Naive thymus-derived CD4-positive, alpha-beta T cell (primary cell): ENCODE measurements at regions of chr11 and their contacts with region 1.

Region 1: GRCh38 chr11:96012086-96012824 is 88.3 kb upstream of the MTMR2 start:
- DNase-seq: peak in 8 of 9 donors; percentile 23 to 89 (median 80)
- ATAC-seq: peak; percentile 83
- H3K4me3 ChIP-seq: no peak overlapping the region
- H3K4me3 Mint-ChIP-seq: peak overlapping the region; percentile 58 to 87 (median 71)
- H3K27ac ChIP-seq: peak overlapping the region; percentile 58
- H3K27ac Mint-ChIP-seq: peak overlapping the region in 6 of 9 donors; percentile 76 to 98 (median 96)
- H3K4me1 ChIP-seq: peaks cover 39 to 52% of the 10 kb centered on the region in 2 donors
- H3K4me1 Mint-ChIP-seq: peaks cover 12 to 50% (median 28%) of the 10 kb centered on the region in 7 donors
- H3K27me3 ChIP-seq: no peaks in the 10 kb centered on the region
- H3K27me3 Mint-ChIP-seq: no peaks in the 10 kb centered on the region

Region 2: DNA sequence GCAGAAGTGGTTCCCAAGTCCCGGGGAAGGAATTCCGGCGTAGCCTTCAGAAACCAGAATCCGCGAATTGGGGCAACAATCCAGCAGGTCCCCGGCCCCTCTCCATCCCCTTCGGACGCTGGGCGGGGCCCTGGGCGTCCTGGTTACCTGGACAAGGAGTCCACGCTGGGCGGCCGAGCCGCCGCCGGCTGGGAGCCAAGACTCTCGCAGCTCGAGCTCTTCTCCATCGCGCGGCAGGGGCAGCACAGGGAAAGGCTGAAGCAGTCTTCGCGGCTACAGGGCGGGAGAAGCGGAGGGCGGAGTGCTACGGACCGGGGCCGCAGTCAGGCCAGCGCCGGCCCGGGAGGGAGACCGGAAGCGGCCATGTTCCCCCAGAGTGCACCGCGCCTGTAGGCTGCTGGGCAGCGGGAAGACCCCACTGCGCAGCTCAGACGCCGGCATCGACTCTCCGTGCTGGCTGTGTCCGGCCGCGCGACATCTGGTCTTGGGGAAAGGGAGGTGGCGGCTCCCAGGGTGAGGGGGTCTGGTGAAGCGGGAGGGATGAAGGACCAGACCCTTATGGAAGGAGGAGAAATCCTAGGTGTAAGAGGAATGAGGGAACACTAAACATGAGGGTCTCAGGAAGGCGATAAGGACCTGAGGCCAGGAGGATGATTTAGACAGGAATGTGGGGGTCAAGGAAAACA is 88.4 kb before region 1 on chr11 and contains the start of gene MTMR2:
- CTCF ChIA-PET with region 1: no interaction called
- POLR2A ChIA-PET with region 1: no interaction called
- intact Hi-C with region 1: loop called in 1 of 2 experiments (anchors 5 kb)
- DNase-seq: peak in 8 of 9 donors; percentile 16 to 70 (median 26)
- ATAC-seq: peak; percentile 87
- H3K4me3 ChIP-seq: peak within 1 kb of the TSS; percentile 91
- H3K4me3 Mint-ChIP-seq: peak within 1 kb of the TSS; percentile 85 to 98 (median 94)
- H3K27ac ChIP-seq: peak within 1 kb of the TSS; percentile 65
- H3K27ac Mint-ChIP-seq: peak within 1 kb of the TSS; percentile 80 to 96 (median 90)
- H3K4me1 ChIP-seq: peaks cover 0 to 12% of the 10 kb centered on the region in 2 donors
- H3K4me1 Mint-ChIP-seq: peaks cover 18 to 37% (median 25%) of the 10 kb centered on the region in 7 donors
- H3K27me3 ChIP-seq: no peaks in the 10 kb centered on the region
- H3K27me3 Mint-ChIP-seq: peaks cover 5 to 11% (median 8%) of the 10 kb centered on the region in 5 donors
- total RNA-seq, gene MTMR2: 9.0 to 20.8 (median 10.5) TPM

Region 3: DNA sequence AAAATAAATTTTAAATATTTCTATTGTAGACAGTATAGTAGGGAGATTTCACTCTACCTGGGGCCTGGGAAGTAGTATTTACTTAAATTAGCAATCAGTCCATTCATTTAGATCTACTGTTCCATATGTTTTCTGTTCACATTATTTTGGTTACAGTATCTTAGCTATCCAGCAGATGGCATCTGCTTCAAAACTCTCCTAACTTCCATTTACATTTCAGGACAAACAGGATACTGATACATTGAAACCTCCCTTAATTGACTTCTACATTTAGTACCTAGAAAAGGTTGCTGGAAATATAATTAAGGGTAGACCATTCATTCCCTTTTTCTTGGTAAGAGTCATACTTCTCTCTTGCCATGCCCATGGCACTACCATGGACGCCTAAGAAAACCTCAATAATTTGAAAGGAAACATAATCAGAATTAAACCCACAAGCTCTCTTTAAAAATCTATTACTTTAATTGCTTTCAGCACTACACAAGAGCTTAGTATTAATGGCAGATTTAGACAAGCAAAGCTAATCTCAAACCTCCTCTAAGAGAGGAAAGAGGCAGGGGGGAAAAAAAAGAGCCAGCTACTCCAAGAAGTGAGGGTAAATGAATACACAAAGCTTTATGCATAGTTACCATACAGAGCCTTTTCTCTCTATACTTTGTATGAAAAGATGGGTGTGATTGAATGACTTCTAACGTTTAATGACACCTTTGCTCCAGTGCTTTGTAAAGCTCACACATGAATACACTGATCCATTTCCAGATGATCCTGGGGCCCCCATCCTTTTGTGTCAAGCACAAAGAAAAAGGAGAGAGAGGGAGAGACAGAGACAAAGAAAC is 42.8 kb after region 1 on chr11:
- CTCF ChIA-PET with region 1: interaction called, 4 read pairs
- POLR2A ChIA-PET with region 1: interaction called, 5 read pairs
- intact Hi-C with region 1: loop called (anchors 2 kb)
- DNase-seq: peak in 5 of 9 donors; percentile 15 to 41 (median 29)
- ATAC-seq: peak; percentile 72
- H3K4me3 ChIP-seq: no peak overlapping the region
- H3K4me3 Mint-ChIP-seq: peak overlapping the region in 4 of 10 donors; percentile 4 to 63 (median 32)
- H3K27ac ChIP-seq: no peak overlapping the region
- H3K27ac Mint-ChIP-seq: peak overlapping the region in 8 of 9 donors; percentile 15 to 88 (median 70)
- H3K4me1 ChIP-seq: peaks cover 0 to 16% of the 10 kb centered on the region in 2 donors
- H3K4me1 Mint-ChIP-seq: peaks cover 18 to 89% (median 77%) of the 10 kb centered on the region in 7 donors
- H3K27me3 ChIP-seq: no peaks in the 10 kb centered on the region
- H3K27me3 Mint-ChIP-seq: no peaks in the 10 kb centered on the region

Region 4: DNA sequence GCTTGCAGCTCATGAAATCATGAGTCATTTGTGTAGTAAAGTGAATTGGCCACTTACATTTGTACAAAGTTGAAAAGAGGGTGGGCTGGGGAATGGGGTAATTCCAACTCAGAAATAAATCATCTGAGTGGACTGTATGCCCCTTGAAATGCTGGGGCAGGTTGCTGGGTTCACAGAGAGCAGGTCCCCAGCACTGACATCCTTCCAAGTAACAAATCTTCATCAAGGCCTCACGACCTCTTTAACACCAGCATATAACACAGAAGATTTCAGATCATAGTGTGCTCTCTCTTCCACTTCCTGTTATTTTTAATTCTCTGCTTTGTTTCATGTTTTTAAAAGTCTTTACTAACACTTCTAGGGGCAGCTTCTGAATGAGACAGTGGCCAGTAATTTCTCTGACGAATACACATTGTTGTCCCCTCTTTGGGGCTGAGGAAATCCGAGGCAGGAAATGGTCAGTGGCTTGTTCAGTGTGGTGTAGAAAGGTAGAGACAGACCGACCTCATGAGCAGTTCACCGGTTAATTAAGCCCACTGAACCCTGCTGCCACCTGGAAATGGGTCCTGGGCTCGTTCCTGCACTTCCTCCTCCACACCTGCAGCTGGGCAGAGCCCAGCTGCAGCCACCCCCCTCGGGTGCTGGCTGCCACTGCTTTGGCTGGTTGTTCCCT is 203.0 kb after region 1 on chr11:
- CTCF ChIA-PET with region 1: no interaction called
- POLR2A ChIA-PET with region 1: no interaction called
- intact Hi-C with region 1: loop called in 1 of 2 experiments (anchors 5 kb)
- DNase-seq: peak in 7 of 9 donors; percentile 25 to 67 (median 62)
- ATAC-seq: peak; percentile 78
- H3K4me3 ChIP-seq: peak overlapping the region; percentile 47
- H3K4me3 Mint-ChIP-seq: peak overlapping the region; percentile 64 to 80 (median 75)
- H3K27ac ChIP-seq: peak overlapping the region; percentile 75
- H3K27ac Mint-ChIP-seq: peak overlapping the region; percentile 89 to 99 (median 96)
- H3K4me1 ChIP-seq: peaks cover 73 to 96% of the 10 kb centered on the region in 2 donors
- H3K4me1 Mint-ChIP-seq: peaks cover 54 to 100% (median 91%) of the 10 kb centered on the region in 7 donors
- H3K27me3 ChIP-seq: no peaks in the 10 kb centered on the region
- H3K27me3 Mint-ChIP-seq: no peaks in the 10 kb centered on the region

Region 5: DNA sequence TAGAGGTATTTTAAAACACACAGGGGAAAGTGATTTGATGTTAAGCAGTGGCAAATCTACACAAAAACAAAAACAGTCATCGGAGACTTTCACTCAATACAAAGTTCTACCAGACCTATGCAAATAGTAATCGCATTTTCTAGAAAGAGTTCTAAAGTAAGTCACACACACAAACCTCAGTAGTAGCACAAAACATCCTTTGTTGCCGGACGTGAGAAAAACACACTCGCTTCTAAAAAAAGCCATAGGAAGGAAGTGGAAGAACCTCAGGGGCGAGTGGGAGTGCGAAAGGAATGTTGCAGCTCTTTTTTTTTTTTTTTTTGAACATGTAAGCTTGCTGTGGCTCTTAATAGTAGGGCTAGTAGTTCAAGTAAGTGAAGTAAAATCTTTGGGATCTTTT is 241.8 kb after region 1 on chr11:
- CTCF ChIA-PET with region 1: no interaction called
- POLR2A ChIA-PET with region 1: interaction called, 5 read pairs
- intact Hi-C with region 1: loop called (anchors 1 kb)
- DNase-seq: peak in 7 of 9 donors; percentile 32 to 64 (median 43)
- ATAC-seq: peak; percentile 32
- H3K4me3 ChIP-seq: peak overlapping the region; percentile 40
- H3K4me3 Mint-ChIP-seq: peak overlapping the region; percentile 74 to 87 (median 81)
- H3K27ac ChIP-seq: peak overlapping the region; percentile 77
- H3K27ac Mint-ChIP-seq: peak overlapping the region; percentile 87 to 100 (median 96)
- H3K4me1 ChIP-seq: peaks cover 58 to 78% of the 10 kb centered on the region in 2 donors
- H3K4me1 Mint-ChIP-seq: peaks cover 62 to 99% (median 94%) of the 10 kb centered on the region in 7 donors
- H3K27me3 ChIP-seq: no peaks in the 10 kb centered on the region
- H3K27me3 Mint-ChIP-seq: no peaks in the 10 kb centered on the region